ENCODE measurements at regions of chr6 and their contacts with region 1.

Region 1: GRCh38 chr6:47009566-47009965 is 32.6 kb downstream of the ADGRF1 start:
- DNase-seq: no peak
- H3K4me3 ChIP-seq: no peak overlapping the region
- H3K27ac ChIP-seq: peak overlapping the region in 1 of 2 donors; percentile 38
- H3K4me1 ChIP-seq: no peaks in the 10 kb centered on the region
- H3K27me3 ChIP-seq: no peaks in the 10 kb centered on the region
- CTCF ChIP-seq: no peak
- POLR2A ChIP-seq: no peak

Region 2: GRCh38 chr6:46799657-46800056 is 209.9 kb before region 1 on chr6:
- intact Hi-C with region 1: no loop called
- DNase-seq: no peak
- H3K4me3 ChIP-seq: no peak overlapping the region
- H3K27ac ChIP-seq: no peak overlapping the region
- H3K4me1 ChIP-seq: no peaks in the 10 kb centered on the region
- H3K27me3 ChIP-seq: no peaks in the 10 kb centered on the region
- CTCF ChIP-seq: no peak
- POLR2A ChIP-seq: no peak

Region 3: GRCh38 chr6:46963626-46964025 is 45.9 kb before region 1 on chr6:
- intact Hi-C with region 1: loop called (anchors 2 kb)
- DNase-seq: no peak
- H3K4me3 ChIP-seq: no peak overlapping the region
- H3K27ac ChIP-seq: peak overlapping the region in 1 of 2 donors; percentile 10
- H3K4me1 ChIP-seq: no peaks in the 10 kb centered on the region
- H3K27me3 ChIP-seq: no peaks in the 10 kb centered on the region
- CTCF ChIP-seq: no peak
- POLR2A ChIP-seq: no peak

Region 4: DNA sequence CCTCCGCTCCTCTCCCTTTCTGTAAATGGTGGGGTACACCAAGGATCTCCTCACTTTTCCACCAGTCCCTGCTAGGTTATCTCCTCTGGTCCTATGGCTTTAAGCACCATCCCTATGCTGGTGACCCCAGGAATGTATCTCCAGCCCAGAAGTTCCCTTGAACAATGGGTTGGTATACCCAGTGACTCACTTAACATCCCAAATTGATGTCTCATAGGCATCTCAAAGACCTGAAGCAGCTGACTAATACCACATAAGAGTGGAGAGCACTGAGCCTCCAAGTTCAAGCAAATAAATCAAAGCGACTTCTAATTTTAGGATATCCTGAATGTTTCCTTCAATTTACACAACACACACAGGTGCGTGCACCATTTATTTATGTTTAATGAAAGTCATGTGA is 15.7 kb before region 1 on chr6:
- intact Hi-C with region 1: no loop called
- DNase-seq: no peak
- H3K4me3 ChIP-seq: no peak overlapping the region
- H3K27ac ChIP-seq: no peak overlapping the region
- H3K4me1 ChIP-seq: no peaks in the 10 kb centered on the region
- H3K27me3 ChIP-seq: no peaks in the 10 kb centered on the region
- CTCF ChIP-seq: no peak
- POLR2A ChIP-seq: no peak

Measured in breast epithelium (tissue), 4 donors.